Calu3 (cell line): ENCODE measurements at regions of chr5 and their contacts with region 1.

Region 1: GRCh38 chr5:167688341-167689130 is 602.9 kb upstream of the WWC1 start:
- DNase-seq: no peak
- H3K4me3 Mint-ChIP-seq: no peak overlapping the region
- H3K27ac Mint-ChIP-seq: no peak overlapping the region
- H3K4me1 Mint-ChIP-seq: peaks cover 10% of the 10 kb centered on the region
- H3K27me3 Mint-ChIP-seq: no peaks in the 10 kb centered on the region
- CTCF ChIP-seq: no peak

Region 2: DNA sequence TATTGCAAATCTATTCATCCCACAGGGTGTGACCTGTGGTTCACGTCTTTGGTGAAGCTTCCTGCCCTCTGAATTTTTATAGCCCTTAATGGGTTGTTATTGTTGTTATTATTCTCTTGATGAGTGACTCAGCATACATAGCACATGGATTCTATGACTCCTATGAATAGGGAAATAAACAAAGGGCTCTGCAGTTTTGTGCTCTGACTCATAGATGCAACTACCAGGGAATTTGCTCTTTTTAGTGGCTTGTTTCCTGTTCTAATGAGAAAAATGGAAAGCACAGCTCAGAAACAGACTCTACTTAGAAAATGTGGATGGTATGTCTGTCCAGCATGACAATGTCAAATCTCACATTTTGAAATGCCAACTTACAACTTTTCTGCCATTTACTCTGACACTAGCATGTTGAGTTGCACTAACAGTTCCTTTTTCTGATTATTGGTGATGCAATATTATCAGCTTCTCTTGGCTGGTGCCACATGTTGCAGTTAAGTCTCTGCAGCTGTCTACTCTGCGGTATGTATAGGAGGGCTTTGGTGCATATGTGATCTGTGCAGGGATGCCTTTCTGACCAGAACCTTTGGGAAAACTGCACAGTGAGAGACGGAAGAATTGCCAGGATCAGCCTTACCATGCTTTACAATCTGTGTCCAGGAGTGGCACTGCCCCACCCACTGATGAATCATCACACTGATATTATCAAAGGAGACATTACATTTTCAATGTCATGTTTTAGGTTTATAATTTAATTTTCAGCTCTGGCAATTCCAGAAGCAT is 393.4 kb before region 1 on chr5:
- CTCF ChIA-PET with region 1: no interaction called
- intact Hi-C with region 1: loop called (anchors 5 kb)
- DNase-seq: peak; percentile 59
- H3K4me3 Mint-ChIP-seq: peak overlapping the region; percentile 41
- H3K27ac Mint-ChIP-seq: peak overlapping the region; percentile 83
- H3K4me1 Mint-ChIP-seq: peaks cover 32% of the 10 kb centered on the region
- H3K27me3 Mint-ChIP-seq: no peaks in the 10 kb centered on the region
- CTCF ChIP-seq: no peak